ENCODE measurements at regions of chr6 and their contacts with region 1.

Region 1: GRCh38 chr6:123091091-123091895 is 95.3 kb downstream of the CLVS2 start:
- DNase-seq: peak; percentile 70 to 75
- ATAC-seq: peak; percentile 93 to 94
- H3K4me3 ChIP-seq: peak overlapping the region in 3 of 4 donors; percentile 1 to 39 (median 15)
- H3K27ac ChIP-seq: peak overlapping the region; percentile 79 to 91 (median 85)
- H3K4me1 ChIP-seq: peaks cover 29 to 38% of the 10 kb centered on the region in 2 donors
- H3K27me3 ChIP-seq: no peaks in the 10 kb centered on the region
- CTCF ChIP-seq: no peak
- POLR2A ChIP-seq: peak; percentile 30 to 59

Region 2: DNA sequence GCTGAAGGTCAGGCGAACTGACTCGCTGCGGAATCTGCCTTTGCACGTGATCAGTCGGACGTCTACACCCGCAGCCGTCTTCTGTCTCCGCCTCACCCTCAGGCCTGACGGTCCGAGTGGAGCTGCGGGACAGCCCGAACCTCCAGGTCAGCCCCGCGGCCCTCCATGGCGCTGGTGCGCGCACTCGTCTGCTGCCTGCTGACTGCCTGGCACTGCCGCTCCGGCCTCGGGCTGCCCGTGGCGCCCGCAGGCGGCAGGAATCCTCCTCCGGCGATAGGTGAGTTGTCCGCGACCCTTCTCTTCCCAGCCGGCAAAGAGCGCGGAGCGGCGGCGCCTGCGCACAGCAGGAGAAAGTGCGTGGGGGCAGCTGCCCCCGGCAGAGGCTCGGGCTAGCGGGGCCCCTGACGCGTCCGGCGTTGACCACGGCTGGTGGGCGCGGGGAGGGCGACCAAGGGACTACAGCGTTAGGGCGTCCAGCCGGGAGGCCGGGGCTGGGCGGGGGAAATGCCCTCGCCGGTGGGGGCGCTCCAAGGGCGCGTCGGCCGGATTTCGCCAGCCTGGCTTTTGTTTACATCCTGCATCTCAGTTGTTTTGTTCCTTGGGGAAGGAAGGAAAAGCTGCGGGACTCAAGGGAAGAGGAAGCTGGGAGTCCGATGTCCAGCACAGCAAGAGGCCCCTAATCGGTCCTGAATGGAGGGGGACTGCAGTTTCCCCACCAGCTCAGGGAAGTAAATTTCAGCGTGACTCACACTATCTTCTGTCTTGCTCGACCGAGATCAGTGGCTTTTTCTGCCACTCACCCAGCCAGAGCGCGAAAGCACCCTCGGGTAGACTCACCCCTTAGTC is 301.9 kb before region 1 on chr6 and contains the start of gene SMPDL3A:
- in situ Hi-C with region 1: no loop called
- intact Hi-C with region 1: loop called (anchors 10 kb)
- DNase-seq: peak; percentile 84 to 86
- ATAC-seq: peak; percentile 69 to 79
- H3K4me3 ChIP-seq: peak within 1 kb of the TSS; percentile 61 to 94 (median 80)
- H3K27ac ChIP-seq: peak within 1 kb of the TSS; percentile 93 to 98 (median 96)
- H3K4me1 ChIP-seq: peaks cover 36 to 45% of the 10 kb centered on the region in 2 donors
- H3K27me3 ChIP-seq: no peaks in the 10 kb centered on the region
- CTCF ChIP-seq: peak; percentile 22 to 45 (median 37)
- POLR2A ChIP-seq: peak; percentile 82 to 91
- total RNA-seq, gene SMPDL3A: 18.4 to 38.4 (median 32.6) TPM

Region 3: DNA sequence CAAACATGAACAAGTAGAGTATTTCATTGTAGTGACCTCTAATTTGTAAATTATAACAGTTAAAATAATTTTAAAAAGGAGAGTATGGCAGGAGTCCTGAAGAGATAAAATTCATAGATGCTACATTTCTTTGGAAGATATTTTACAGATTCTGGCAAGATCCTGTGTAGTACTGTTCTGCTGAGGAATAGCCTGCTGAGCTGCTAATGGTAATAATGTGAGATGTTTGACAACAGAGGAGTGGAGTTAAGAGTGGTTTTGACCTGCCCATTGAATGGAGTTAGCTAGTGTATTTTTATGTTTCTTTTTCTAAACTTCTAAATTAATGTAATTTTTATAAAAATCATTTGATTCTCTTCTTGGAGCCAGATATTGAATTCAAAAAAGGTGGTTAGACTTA is 83.4 kb before region 1 on chr6:
- in situ Hi-C with region 1: no loop called
- intact Hi-C with region 1: no loop called
- DNase-seq: no peak
- ATAC-seq: no peak
- H3K4me3 ChIP-seq: no peak overlapping the region
- H3K27ac ChIP-seq: no peak overlapping the region
- H3K4me1 ChIP-seq: no peaks in the 10 kb centered on the region
- H3K27me3 ChIP-seq: no peaks in the 10 kb centered on the region
- CTCF ChIP-seq: no peak
- POLR2A ChIP-seq: no peak

Region 4: GRCh38 chr6:123168892-123169773 is 77.8 kb after region 1 on chr6:
- in situ Hi-C with region 1: no loop called
- intact Hi-C with region 1: loop called (anchors 5 kb)
- DNase-seq: peak in 1 of 2 donors; percentile 22
- ATAC-seq: peak; percentile 96 to 98
- H3K4me3 ChIP-seq: no peak overlapping the region
- H3K27ac ChIP-seq: peak overlapping the region; percentile 70 to 75 (median 73)
- H3K4me1 ChIP-seq: peaks cover 16 to 22% of the 10 kb centered on the region in 2 donors
- H3K27me3 ChIP-seq: no peaks in the 10 kb centered on the region
- CTCF ChIP-seq: no peak
- POLR2A ChIP-seq: no peak

Region 5: GRCh38 chr6:123226398-123226797 is 135.1 kb after region 1 on chr6:
- in situ Hi-C with region 1: no loop called
- intact Hi-C with region 1: loop called (anchors 5 kb)
- DNase-seq: no peak
- ATAC-seq: no peak
- H3K4me3 ChIP-seq: no peak overlapping the region
- H3K27ac ChIP-seq: peak overlapping the region; percentile 75 to 87 (median 79)
- H3K4me1 ChIP-seq: peaks cover 18 to 33% of the 10 kb centered on the region in 2 donors
- H3K27me3 ChIP-seq: no peaks in the 10 kb centered on the region
- CTCF ChIP-seq: no peak
- POLR2A ChIP-seq: no peak

Region 6: DNA sequence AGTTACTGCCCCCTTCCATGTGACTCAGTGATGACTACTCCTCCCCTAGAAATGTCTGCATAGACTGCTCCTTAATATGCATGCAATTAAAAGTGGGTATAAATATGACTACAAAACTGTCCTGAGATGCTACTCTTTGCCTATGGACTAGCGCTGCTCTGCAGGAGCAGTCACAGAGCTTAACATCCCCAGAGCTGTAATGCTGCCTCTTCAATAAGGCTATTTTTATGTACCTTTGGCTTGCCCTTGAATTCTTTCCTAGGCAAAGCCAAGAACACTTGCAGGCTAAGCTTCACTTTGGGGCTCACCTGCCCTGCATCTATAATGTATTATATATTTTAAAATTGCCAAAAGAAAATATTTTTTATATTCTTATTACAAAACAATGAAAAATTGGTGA is 203.9 kb after region 1 on chr6:
- in situ Hi-C with region 1: no loop called
- intact Hi-C with region 1: loop called (anchors 2 kb)
- DNase-seq: no peak
- ATAC-seq: peak in 1 of 2 donors; percentile 65
- H3K4me3 ChIP-seq: no peak overlapping the region
- H3K27ac ChIP-seq: peak overlapping the region in 2 of 4 donors; percentile 49 to 58
- H3K4me1 ChIP-seq: peaks cover 15 to 16% of the 10 kb centered on the region in 2 donors
- H3K27me3 ChIP-seq: no peaks in the 10 kb centered on the region
- CTCF ChIP-seq: no peak
- POLR2A ChIP-seq: no peak